Common myeloid progenitor, CD34-positive (primary cell): ENCODE measurements at regions of chr1 and their contacts with region 1.

Region 1: GRCh38 chr1:223087291-223088255 is 55.5 kb downstream of the TLR5 start:
- DNase-seq: no peak
- H3K4me3 ChIP-seq: no peak overlapping the region
- H3K27ac ChIP-seq: no peak overlapping the region
- H3K4me1 ChIP-seq: no peaks in the 10 kb centered on the region
- H3K27me3 ChIP-seq: no peaks in the 10 kb centered on the region

Region 2: DNA sequence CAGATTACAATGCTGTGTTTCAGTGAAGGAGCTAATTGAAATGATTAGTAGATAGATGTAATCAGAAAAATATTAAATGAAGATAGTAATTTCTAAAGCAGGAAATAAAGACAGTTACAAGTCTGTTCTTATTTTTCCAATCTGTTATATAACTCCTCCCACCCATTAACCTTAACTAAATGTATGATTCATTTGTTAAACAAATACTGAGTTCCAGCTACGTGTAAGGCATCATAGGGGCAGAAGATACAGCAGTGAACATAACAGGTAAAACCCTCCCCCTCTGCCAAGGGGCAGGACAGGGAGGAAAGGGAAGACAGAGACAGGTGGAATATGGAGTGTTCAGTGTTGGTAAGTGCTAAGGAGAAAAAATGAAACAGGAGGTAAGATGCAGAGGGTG is 350.6 kb before region 1 on chr1 and contains the start of gene FAM177B:
- CTCF ChIA-PET with region 1: interaction called, 14 read pairs
- POLR2A ChIA-PET with region 1: no interaction called
- DNase-seq: no peak
- H3K4me3 ChIP-seq: no peak within 1 kb of the TSS
- H3K27ac ChIP-seq: no peak within 1 kb of the TSS
- H3K4me1 ChIP-seq: no peaks in the 10 kb centered on the region
- H3K27me3 ChIP-seq: no peaks in the 10 kb centered on the region

Region 3: GRCh38 chr1:222792744-222793143 is 294.8 kb before region 1 on chr1:
- CTCF ChIA-PET with region 1: interaction called, 17 read pairs
- POLR2A ChIA-PET with region 1: no interaction called
- DNase-seq: peak; percentile 44 to 63 (median 58)
- H3K4me3 ChIP-seq: no peak overlapping the region
- H3K27ac ChIP-seq: no peak overlapping the region
- H3K4me1 ChIP-seq: no peaks in the 10 kb centered on the region
- H3K27me3 ChIP-seq: no peaks in the 10 kb centered on the region

Region 4: GRCh38 chr1:223097713-223098112 is 10.1 kb after region 1 on chr1:
- CTCF ChIA-PET with region 1: interaction called, 19 read pairs
- POLR2A ChIA-PET with region 1: no interaction called
- DNase-seq: no peak
- H3K4me3 ChIP-seq: no peak overlapping the region
- H3K27ac ChIP-seq: no peak overlapping the region
- H3K4me1 ChIP-seq: peaks cover 0 to under 1% (median 0%) of the 10 kb centered on the region in 4 experiments
- H3K27me3 ChIP-seq: no peaks in the 10 kb centered on the region

Region 5: DNA sequence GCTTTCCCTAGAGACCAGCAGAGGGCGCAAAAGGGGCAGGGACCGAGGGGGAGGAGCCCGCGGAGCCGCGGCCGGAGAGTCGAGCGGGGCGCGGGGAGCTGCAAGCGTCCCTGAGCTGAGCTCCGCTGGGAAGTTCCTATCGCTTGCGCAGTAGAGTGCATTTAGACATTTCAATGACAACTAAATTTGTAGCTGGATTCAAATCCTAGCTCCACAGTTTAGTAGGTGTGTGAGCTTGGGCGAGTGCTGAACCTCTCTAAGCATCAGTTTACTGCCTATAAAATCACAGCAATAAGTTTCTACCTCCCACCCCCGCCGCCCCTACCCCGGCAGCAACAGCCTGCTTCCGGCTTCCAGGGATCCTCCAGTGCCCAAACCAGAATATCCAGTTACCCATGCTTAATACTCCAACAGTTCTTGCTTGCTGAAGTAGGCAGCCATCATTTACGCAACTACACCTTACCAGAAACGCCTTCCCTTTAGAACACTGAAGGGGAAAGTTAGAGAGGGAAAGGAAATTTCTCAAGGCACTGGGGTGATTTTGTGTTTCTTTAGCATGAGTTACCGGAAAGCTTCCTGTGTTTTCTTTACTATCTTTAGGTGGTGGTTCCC is 46.4 kb after region 1 on chr1:
- CTCF ChIA-PET with region 1: interaction called, 63 read pairs
- POLR2A ChIA-PET with region 1: no interaction called
- DNase-seq: peak; percentile 71 to 75 (median 72)
- H3K4me3 ChIP-seq: peak overlapping the region in 5 of 7 experiments; percentile 9 to 44 (median 30)
- H3K27ac ChIP-seq: no peak overlapping the region
- H3K4me1 ChIP-seq: peaks cover 4 to 16% (median 7%) of the 10 kb centered on the region in 4 experiments
- H3K27me3 ChIP-seq: peaks cover 0 to 55% (median 32%) of the 10 kb centered on the region in 5 experiments